ENCODE measurements at regions of chr16 and their contacts with region 1.

Region 1: DNA sequence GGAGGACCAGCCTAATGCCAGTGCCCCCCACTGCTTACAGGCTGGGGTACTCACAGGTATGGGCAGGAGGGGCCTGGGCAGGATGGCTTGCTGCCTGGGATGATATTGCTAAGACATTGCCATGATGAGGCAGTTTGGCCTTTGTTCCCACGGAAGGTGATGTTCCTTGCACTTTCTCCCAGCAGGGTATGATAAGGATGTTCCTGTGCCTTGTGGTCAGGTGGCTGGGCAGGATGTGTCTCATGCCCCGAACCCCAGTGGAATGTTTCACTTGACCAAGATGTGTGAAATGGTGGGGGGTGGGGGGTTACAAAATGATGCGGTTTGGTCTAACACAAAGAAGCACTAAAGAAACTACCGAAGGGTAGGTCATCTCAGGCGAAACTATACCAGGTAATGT is 337.8 kb upstream of the ZFHX3 start:
- DNase-seq: no peak
- H3K4me3 ChIP-seq: no peak overlapping the region
- H3K27ac ChIP-seq: no peak overlapping the region
- H3K4me1 ChIP-seq: no peaks in the 10 kb centered on the region
- H3K27me3 ChIP-seq: no peaks in the 10 kb centered on the region
- CTCF ChIP-seq: no peak

Region 2: DNA sequence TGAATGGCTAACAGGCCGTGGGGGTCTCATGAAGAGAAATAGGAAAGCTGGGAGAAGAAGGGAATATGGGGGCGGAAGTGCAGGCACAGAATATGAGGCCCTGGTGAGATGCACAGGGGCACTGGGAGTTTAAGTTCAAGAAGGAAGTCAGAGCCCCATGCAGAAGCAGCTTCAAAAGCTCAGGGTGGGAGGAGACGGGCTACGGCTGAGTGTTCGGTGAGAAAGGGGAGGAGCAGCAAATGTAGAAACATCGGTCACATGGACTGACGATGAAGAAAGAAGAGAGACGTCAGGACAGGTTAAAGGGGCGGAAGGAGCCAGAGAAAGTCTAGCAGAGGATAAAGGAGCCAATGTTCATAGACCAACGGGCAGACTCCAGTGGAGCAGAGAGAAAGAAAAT is 133.2 kb before region 1 on chr16:
- intact Hi-C with region 1: no loop called
- DNase-seq: no peak
- H3K4me3 ChIP-seq: no peak overlapping the region
- H3K27ac ChIP-seq: no peak overlapping the region
- H3K4me1 ChIP-seq: no peaks in the 10 kb centered on the region
- H3K27me3 ChIP-seq: no peaks in the 10 kb centered on the region
- CTCF ChIP-seq: no peak

Region 3: GRCh38 chr16:73329363-73330292 is 56.1 kb before region 1 on chr16:
- intact Hi-C with region 1: no loop called
- DNase-seq: no peak
- H3K4me3 ChIP-seq: no peak overlapping the region
- H3K27ac ChIP-seq: no peak overlapping the region
- H3K4me1 ChIP-seq: no peaks in the 10 kb centered on the region
- H3K27me3 ChIP-seq: peaks cover 17% of the 10 kb centered on the region
- CTCF ChIP-seq: no peak

Region 4: DNA sequence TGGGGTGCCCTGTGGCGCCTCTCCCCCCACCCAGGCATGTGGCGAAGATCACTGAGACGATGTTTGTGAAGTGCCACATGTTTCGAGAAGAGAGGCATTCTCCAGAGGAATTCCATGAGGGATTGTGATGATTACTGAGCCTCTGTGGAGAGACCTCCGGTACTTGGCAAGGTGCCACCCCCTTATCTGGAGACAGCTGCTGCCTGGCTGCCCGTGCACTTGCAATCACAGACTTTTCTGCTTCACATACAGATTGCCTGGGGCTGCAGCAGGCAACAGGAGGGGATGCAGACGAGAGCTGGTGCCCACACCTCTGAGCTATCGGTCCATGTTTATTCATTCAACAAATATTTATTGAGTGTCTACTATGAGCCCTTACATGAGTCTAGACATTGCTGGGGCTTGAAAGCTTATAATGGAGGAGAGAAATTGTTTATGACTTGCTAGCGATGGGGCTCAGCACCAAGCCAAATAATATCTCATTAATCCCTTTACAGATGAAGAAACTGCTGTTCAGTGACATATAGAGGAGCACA is 20.6 kb before region 1 on chr16:
- intact Hi-C with region 1: loop called (anchors 2 kb)
- DNase-seq: no peak
- H3K4me3 ChIP-seq: no peak overlapping the region
- H3K27ac ChIP-seq: no peak overlapping the region
- H3K4me1 ChIP-seq: peaks cover 4% of the 10 kb centered on the region
- H3K27me3 ChIP-seq: peaks cover 50% of the 10 kb centered on the region
- CTCF ChIP-seq: no peak

Measured in left ventricle myocardium inferior (tissue), 1 donor.